ENCODE measurements at regions of chr5 and their contacts with region 1.

Region 1: GRCh38 chr5:115098041-115098702 is 71.5 kb downstream of the TRIM36 start:
- DNase-seq: peak; percentile 8
- H3K4me3 Mint-ChIP-seq: no peak overlapping the region
- H3K27ac Mint-ChIP-seq: no peak overlapping the region
- H3K4me1 Mint-ChIP-seq: no peaks in the 10 kb centered on the region
- H3K27me3 Mint-ChIP-seq: peaks cover 7% of the 10 kb centered on the region

Region 2: GRCh38 chr5:115246361-115246991 is 148.3 kb after region 1 on chr5:
- intact Hi-C with region 1: loop called (anchors 1 kb)
- DNase-seq: no peak
- H3K4me3 Mint-ChIP-seq: no peak overlapping the region
- H3K27ac Mint-ChIP-seq: no peak overlapping the region
- H3K4me1 Mint-ChIP-seq: peaks cover 14% of the 10 kb centered on the region
- H3K27me3 Mint-ChIP-seq: no peaks in the 10 kb centered on the region

Region 3: GRCh38 chr5:115579747-115580173 is 481.6 kb after region 1 on chr5:
- intact Hi-C with region 1: loop called (anchors 2 kb)
- DNase-seq: no peak
- H3K4me3 Mint-ChIP-seq: no peak overlapping the region
- H3K27ac Mint-ChIP-seq: no peak overlapping the region
- H3K4me1 Mint-ChIP-seq: no peaks in the 10 kb centered on the region
- H3K27me3 Mint-ChIP-seq: no peaks in the 10 kb centered on the region

Region 4: GRCh38 chr5:115857636-115858309 is 759.6 kb after region 1 on chr5:
- intact Hi-C with region 1: no loop called
- DNase-seq: no peak
- H3K4me3 Mint-ChIP-seq: no peak overlapping the region
- H3K27ac Mint-ChIP-seq: no peak overlapping the region
- H3K4me1 Mint-ChIP-seq: peaks cover 17% of the 10 kb centered on the region
- H3K27me3 Mint-ChIP-seq: peaks cover 4% of the 10 kb centered on the region

Region 5: DNA sequence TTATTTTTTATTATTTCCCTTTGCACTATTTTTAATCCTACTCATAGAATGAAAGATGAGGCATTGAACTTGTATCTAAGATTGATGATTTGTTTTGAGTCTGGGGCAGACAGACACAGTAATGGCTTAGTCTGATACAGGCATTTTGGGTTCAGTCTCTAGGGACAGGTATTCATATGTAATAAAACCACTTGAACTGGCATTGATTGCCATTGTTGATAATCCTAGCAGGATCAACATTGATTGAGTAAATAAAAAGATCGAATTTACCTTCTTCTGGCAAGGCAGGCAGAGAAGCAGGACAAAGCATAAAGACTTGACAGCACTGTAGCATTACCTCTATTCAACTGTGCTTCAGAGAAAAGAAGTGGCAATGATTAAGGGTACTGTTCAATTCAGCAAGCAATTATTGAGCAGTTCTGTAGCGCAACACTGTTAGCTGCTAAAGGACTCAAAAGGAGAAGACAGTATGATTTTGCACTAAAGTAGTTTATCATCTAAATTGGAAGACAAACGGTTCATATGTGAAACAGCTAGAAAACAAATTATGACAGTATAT is 1131.0 kb after region 1 on chr5:
- intact Hi-C with region 1: no loop called
- DNase-seq: no peak
- H3K4me3 Mint-ChIP-seq: no peak overlapping the region
- H3K27ac Mint-ChIP-seq: no peak overlapping the region
- H3K4me1 Mint-ChIP-seq: no peaks in the 10 kb centered on the region
- H3K27me3 Mint-ChIP-seq: no peaks in the 10 kb centered on the region